ENCODE measurements at regions of chr4 and their contacts with region 1.

Region 1: GRCh38 chr4:48085821-48086607 is 48.0 kb downstream of the TXK start:
- DNase-seq: no peak
- ATAC-seq: peak; percentile 49
- H3K4me3 Mint-ChIP-seq: no peak overlapping the region
- H3K27ac Mint-ChIP-seq: no peak overlapping the region
- H3K4me1 Mint-ChIP-seq: peaks cover 36% of the 10 kb centered on the region
- H3K27me3 Mint-ChIP-seq: no peaks in the 10 kb centered on the region
- CTCF ChIP-seq: no peak

Region 2: DNA sequence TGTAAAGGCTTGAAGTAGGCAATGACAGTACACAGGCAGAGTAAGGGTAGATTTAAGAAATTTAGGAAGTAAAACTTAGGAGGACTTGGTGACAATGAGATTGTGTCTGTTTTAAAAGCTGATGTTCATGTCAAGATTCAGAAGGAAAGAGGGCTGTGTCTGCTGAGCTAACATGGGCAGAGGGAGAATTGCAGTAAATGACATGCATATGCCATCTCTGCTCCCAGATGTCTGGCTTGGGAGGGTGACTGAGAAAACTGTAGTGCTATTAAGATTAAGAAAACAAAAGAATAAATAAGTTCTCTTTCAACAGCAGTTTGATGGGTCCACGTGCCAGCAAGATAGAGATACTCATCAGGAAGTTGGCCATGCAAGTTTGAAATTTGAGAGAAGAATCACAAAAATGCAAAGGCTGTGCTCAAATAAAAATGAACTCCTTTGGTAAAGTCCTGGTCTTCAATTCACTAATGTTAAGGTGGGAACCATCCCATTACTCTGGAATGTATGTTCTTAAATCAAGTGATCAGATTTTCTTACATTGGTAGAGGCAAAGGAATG is 178.8 kb before region 1 on chr4:
- CTCF ChIA-PET with region 1: no interaction called
- POLR2A ChIA-PET with region 1: no interaction called
- intact Hi-C with region 1: no loop called
- DNase-seq: no peak
- ATAC-seq: no peak
- H3K4me3 Mint-ChIP-seq: no peak overlapping the region
- H3K27ac Mint-ChIP-seq: no peak overlapping the region
- H3K4me1 Mint-ChIP-seq: peaks cover 26% of the 10 kb centered on the region
- H3K27me3 Mint-ChIP-seq: no peaks in the 10 kb centered on the region
- CTCF ChIP-seq: no peak

Region 3: GRCh38 chr4:47926639-47927258 is 159.3 kb before region 1 on chr4:
- CTCF ChIA-PET with region 1: interaction called, 8 read pairs
- POLR2A ChIA-PET with region 1: no interaction called
- intact Hi-C with region 1: loop called (anchors 5 kb)
- DNase-seq: peak; percentile 64
- ATAC-seq: peak; percentile 99
- H3K4me3 Mint-ChIP-seq: peak overlapping the region; percentile 22
- H3K27ac Mint-ChIP-seq: no peak overlapping the region
- H3K4me1 Mint-ChIP-seq: peaks cover 12% of the 10 kb centered on the region
- H3K27me3 Mint-ChIP-seq: peaks cover 17% of the 10 kb centered on the region
- CTCF ChIP-seq: peak; percentile 68

Region 4: DNA sequence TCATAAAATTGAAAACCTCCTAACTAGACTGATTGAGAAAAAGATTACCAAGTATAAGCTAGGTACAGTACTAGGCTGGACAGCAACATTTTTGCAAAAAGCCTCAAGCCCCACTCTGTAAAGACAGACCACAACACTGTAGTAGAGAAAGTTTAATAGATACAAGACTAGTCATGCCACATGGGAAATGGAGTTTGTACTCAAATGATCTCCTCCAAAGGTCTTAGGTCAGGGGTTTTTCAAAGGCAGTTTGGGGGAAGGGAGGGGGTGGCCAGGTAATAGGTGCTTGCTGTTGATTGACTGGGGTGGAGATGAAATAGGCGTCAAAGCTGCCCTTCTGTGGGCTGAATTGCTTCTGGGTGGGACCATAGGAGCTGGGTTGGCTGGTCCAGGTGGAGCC is 83.7 kb before region 1 on chr4:
- CTCF ChIA-PET with region 1: interaction called, 28 read pairs
- POLR2A ChIA-PET with region 1: interaction called, 3 read pairs
- intact Hi-C with region 1: loop called (anchors 2 kb)
- DNase-seq: no peak
- ATAC-seq: no peak
- H3K4me3 Mint-ChIP-seq: no peak overlapping the region
- H3K27ac Mint-ChIP-seq: no peak overlapping the region
- H3K4me1 Mint-ChIP-seq: no peaks in the 10 kb centered on the region
- H3K27me3 Mint-ChIP-seq: peaks cover 2% of the 10 kb centered on the region
- CTCF ChIP-seq: no peak

Region 5: DNA sequence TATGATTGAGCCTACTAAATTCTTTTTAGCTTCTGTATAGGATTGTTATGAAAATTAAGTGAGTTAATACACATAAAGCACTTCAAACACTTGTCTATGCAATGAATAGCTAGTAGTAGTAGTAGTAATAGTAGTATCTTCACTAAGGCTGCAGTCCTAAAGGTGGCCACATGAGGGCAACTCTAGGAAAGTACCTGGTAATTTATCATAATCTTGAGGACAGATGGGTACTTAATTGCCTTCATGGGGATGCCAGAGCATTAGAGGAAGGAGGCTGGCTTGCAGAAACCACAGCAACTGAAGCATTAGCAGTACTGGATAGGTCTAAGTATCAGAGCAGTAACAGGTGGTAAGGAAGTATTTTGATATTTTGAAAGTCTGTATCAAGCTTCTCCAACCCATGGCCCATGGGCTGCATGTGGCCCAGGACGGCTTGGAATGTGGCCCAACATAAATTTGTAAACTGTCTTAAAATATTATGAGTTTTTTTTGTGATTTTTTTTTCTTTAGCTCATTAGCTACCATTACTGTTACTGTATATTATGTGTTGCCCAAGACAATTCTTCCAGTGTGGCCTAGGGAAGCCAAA is 52.1 kb before region 1 on chr4:
- CTCF ChIA-PET with region 1: interaction called, 90 read pairs
- POLR2A ChIA-PET with region 1: no interaction called
- intact Hi-C with region 1: loop called (anchors 5 kb)
- DNase-seq: peak; percentile 88
- ATAC-seq: peak; percentile 72
- H3K4me3 Mint-ChIP-seq: no peak overlapping the region
- H3K27ac Mint-ChIP-seq: no peak overlapping the region
- H3K4me1 Mint-ChIP-seq: peaks cover 60% of the 10 kb centered on the region
- H3K27me3 Mint-ChIP-seq: peaks cover 2% of the 10 kb centered on the region
- CTCF ChIP-seq: peak; percentile 87

Region 6: GRCh38 chr4:48065587-48066052 is 20.4 kb before region 1 on chr4:
- CTCF ChIA-PET with region 1: interaction called, 56 read pairs
- POLR2A ChIA-PET with region 1: interaction called, 3 read pairs
- intact Hi-C with region 1: no loop called
- DNase-seq: no peak
- ATAC-seq: peak; percentile 81
- H3K4me3 Mint-ChIP-seq: no peak overlapping the region
- H3K27ac Mint-ChIP-seq: peak overlapping the region; percentile 55
- H3K4me1 Mint-ChIP-seq: peaks cover 34% of the 10 kb centered on the region
- H3K27me3 Mint-ChIP-seq: no peaks in the 10 kb centered on the region
- CTCF ChIP-seq: no peak

Region 7: DNA sequence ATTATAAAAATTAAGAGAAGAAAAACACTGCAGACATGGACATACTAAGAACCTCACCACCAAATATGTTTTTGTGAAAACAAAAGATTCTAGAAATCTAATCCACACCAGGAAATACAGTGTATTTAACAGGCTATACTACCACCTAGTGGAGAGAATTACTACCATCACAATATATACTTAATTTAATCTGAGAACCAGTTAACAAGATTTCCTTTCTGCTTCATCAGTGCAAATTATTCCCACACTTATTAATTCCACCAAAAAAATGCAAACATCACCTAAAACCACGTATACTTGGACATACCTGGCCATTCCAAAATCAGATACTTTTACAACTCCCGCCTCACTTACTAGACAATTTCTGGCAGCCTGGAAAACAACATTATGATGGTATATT is 55.0 kb after region 1 on chr4:
- CTCF ChIA-PET with region 1: interaction called, 16 read pairs
- POLR2A ChIA-PET with region 1: no interaction called
- intact Hi-C with region 1: no loop called
- DNase-seq: no peak
- ATAC-seq: peak; percentile 40
- H3K4me3 Mint-ChIP-seq: no peak overlapping the region
- H3K27ac Mint-ChIP-seq: no peak overlapping the region
- H3K4me1 Mint-ChIP-seq: peaks cover 49% of the 10 kb centered on the region
- H3K27me3 Mint-ChIP-seq: no peaks in the 10 kb centered on the region
- CTCF ChIP-seq: peak; percentile 84